Thyroid gland (tissue), 4 donors: ENCODE measurements at regions of chr15 and their contacts with region 1.

Region 1: GRCh38 chr15:52735231-52736089 is 54.7 kb downstream of the ONECUT1 start:
- DNase-seq: peak; percentile 48 to 63
- H3K4me3 ChIP-seq: no peak overlapping the region
- H3K27ac ChIP-seq: no peak overlapping the region
- H3K4me1 ChIP-seq: peaks cover 0 to 26% of the 10 kb centered on the region in 2 donors
- H3K27me3 ChIP-seq: no peaks in the 10 kb centered on the region
- CTCF ChIP-seq: peak in 5 of 6 experiments; percentile 67 to 91 (median 79)
- POLR2A ChIP-seq: no peak

Region 2: DNA sequence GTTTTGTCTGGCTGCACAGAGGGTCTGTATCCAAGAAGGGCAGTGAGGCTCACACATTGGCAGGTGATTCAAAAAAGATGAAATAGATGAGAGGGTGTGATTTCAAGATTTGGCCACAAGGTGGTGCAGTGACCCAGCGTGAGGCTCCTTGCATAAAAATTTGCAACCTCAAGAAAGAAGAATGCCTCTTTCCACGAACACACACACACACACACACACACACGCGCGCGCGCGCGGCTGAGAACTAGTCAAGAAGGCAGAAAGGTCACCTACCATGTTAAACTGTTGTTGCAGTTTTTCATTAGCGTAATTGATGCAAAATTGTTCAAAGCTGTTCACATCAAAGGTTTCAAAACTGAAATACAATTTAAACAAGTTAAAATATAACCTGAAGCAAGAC is 479.1 kb before region 1 on chr15:
- intact Hi-C with region 1: loop called (anchors 2 kb)
- DNase-seq: peak; percentile 75 to 78
- H3K4me3 ChIP-seq: no peak overlapping the region
- H3K27ac ChIP-seq: peak overlapping the region in 2 of 3 donors; percentile 67 to 74
- H3K4me1 ChIP-seq: peaks cover 11 to 28% of the 10 kb centered on the region in 2 donors
- H3K27me3 ChIP-seq: no peaks in the 10 kb centered on the region
- CTCF ChIP-seq: peak; percentile 55 to 83 (median 69)
- POLR2A ChIP-seq: no peak

Region 3: GRCh38 chr15:52463638-52464037 is 271.8 kb before region 1 on chr15:
- intact Hi-C with region 1: no loop called
- DNase-seq: no peak
- H3K4me3 ChIP-seq: no peak overlapping the region
- H3K27ac ChIP-seq: no peak overlapping the region
- H3K4me1 ChIP-seq: no peaks in the 10 kb centered on the region
- H3K27me3 ChIP-seq: no peaks in the 10 kb centered on the region
- CTCF ChIP-seq: no peak
- POLR2A ChIP-seq: no peak

Region 4: DNA sequence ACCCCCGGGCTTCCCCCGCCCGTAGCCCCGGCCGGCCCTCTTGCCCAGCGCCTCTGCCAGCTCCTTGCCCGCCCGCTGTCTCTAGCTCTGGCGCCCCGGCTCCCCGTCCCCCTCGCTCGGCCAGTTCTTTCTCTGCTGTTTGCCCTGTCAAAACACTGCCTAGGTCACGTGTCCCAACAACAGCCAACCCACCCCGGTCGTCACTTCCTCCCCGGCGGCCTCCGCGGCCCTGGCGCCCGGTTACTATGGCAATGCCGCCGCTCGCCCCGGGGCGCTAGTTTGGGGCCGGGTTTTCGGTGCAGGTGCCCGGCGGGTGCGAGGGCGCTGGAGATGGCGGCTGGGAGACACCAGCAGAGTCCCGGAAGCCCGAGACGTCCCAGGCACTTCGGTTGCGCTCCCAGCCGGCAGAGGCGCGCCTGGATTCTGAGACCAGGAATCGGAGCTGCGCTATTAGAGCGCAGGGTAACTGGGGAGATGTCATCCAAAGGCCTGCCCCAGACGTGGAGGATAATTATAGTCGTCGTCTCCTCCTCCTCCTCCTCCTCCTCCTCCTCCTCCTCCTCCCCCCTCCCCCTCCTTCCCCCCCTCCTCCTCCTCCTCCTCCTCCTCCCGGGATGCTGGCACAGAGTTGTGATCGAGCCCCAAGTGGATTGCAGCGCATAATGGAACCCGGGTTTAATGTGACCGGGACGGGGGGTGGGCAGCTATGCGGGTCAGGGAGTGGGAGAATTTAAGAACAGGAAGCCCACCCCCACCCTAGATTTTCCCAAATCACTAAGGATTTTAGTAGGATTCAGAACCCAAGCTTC is 56.0 kb before region 1 on chr15 and contains the start of gene ATOSA:
- intact Hi-C with region 1: loop called (anchors 10 kb)
- DNase-seq: peak; percentile 94 to 95
- H3K4me3 ChIP-seq: peak within 1 kb of the TSS; percentile 38 to 88 (median 86)
- H3K27ac ChIP-seq: peak within 1 kb of the TSS; percentile 98 to 100 (median 99)
- H3K4me1 ChIP-seq: peaks cover 37% of the 10 kb centered on the region in 2 donors
- H3K27me3 ChIP-seq: no peaks in the 10 kb centered on the region
- CTCF ChIP-seq: peak in 1 of 6 experiments; percentile 6
- POLR2A ChIP-seq: peak; percentile 58 to 98
- total RNA-seq, gene ATOSA: 88.7 to 164 (median 117) TPM